GM10248 (cell line): ENCODE measurements at regions of chr11 and their contacts with region 1.

Region 1: GRCh38 chr11:73661035-73661628 is 14.8 kb downstream of the PLEKHB1 start:
- DNase-seq: peak; percentile 96
- CTCF ChIP-seq: peak; percentile 99

Region 2: DNA sequence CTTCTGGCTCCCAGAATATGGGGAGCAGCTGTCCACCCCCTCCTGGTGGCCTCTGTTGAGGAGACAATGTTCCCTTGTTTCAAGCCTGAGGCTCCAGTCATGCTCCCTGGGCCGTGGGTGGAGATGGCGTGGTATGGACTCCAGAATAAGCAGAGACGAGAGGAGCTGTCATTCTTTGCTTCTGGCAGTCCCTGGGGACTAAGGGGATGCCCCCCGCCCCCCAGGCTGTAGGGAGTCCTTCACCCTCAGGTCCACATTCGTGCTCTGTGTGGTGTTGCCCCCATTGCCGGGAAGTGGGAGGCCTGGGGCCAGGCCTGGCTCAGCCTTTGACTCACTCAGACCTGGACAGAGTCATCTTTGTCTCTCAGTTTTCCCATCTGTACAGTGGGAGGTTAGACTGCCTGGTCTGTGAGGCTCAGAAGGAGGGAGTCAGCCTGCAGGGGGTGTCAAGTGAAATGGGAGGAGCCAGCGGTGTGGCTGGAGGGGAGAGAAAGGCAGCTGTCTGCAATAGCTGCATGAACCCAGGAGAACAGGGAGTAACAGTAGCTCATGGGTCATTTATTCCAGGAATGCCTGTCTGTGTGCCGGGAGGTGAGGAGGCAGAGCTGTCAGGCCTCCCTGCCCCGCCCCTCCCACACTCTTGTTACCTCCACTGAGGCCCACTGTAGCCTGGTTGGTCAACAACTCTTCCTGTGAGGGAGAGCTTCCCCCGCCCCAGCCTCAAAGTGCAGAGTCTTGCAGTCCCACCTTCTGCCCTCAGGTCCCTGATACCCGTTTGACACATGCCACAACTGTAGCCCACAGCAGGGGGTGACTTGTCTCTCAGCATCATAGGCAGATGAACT is 346.8 kb before region 1 on chr11:
- CTCF ChIA-PET with region 1: interaction called, 22 read pairs
- POLR2A ChIA-PET with region 1: no interaction called
- DNase-seq: peak; percentile 65
- CTCF ChIP-seq: no peak

Region 3: GRCh38 chr11:73376160-73376802 is 284.9 kb before region 1 on chr11 and contains the start of gene RELT:
- CTCF ChIA-PET with region 1: interaction called, 21 read pairs
- POLR2A ChIA-PET with region 1: no interaction called
- DNase-seq: peak; percentile 98
- CTCF ChIP-seq: peak; percentile 88

Region 4: DNA sequence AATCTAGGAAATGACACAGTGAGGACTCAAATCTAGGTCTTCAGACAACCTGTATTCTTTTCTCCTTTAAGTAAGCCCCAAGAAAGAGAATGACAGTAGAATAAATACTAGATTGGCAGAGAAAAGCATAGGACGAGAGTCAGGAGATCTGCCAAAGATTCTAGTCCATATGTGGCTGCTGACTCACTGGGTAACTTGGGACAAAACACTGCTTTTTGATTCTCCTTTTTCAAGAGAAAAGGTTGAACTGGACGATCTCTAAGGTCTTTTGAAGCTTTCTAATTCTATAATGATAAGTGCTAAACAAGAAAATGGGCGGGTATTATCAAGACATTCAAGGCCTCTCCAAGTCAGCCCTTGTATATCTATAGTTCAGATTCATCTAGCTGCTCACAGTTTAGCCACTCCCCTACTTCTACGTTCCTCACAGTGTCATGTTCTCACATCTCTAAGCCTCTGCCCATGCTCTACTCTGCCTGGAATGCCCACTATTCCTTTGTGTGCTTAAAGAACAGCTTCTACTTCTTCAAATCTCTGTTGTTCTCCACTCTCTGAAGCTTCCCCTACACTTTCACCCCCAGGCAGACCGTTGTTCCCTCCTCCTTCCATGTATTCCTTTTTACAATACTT is 231.9 kb before region 1 on chr11:
- CTCF ChIA-PET with region 1: interaction called, 10 read pairs
- POLR2A ChIA-PET with region 1: no interaction called
- DNase-seq: no peak
- CTCF ChIP-seq: no peak

Region 5: DNA sequence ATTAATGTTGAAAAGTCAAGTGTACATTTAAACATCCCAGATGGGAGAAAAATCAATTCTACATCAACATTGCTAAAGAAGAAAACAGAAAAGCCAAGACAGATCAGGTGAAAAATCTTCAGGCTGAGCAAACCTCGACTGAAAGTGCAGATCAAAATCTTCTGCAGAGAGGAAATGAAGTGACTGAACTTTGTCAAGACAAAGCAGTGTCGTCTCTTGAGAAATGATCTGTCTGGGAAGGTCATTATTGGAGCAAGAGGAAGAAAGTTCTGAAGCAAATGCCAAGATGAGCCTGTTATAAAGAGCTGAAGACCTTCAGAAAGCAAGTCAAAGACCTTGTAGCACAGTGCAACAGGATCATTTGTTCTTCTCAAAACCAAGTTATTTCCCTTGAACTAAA is 20.5 kb before region 1 on chr11:
- CTCF ChIA-PET with region 1: interaction called, 75 read pairs
- POLR2A ChIA-PET with region 1: no interaction called
- DNase-seq: no peak
- CTCF ChIP-seq: no peak

Region 6: DNA sequence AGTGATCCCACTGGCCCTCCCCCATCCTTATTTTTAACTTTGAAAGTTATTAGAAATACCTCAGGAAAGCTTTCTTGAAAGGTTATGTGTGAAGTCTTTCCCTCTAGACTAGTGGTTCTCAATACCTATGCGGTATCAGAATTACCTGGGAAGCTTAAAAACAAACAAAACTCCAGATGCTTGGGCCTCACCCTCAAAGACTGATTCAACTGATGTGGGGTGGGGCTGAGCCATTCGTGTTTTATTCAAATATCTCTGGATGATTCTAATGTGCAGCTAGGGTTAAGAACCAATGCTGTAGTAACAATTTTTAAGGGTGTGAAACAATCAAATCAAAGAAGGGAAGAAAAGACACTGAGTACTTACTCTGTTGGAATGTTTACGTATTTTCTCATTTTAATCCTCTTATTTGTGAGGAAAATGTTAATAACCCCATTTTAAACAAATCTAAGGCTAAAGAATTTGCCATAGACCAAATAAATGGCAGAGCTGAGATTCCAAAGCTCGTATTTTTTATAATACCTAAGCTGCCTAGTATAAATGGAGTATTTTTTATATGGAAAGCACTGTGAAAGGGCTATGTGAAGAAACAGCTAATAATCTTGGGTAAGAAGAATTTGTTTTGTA is 32.9 kb after region 1 on chr11:
- CTCF ChIA-PET with region 1: interaction called, 15 read pairs
- POLR2A ChIA-PET with region 1: no interaction called
- DNase-seq: no peak
- CTCF ChIP-seq: no peak